GM12878 (cell line): ENCODE measurements at regions of chr18 and their contacts with region 1.

Region 1: GRCh38 chr18:80194874-80195570 is 52.3 kb downstream of the PARD6G start:
- DNase-seq: peak; percentile 48
- ATAC-seq: peak; percentile 89
- H3K4me3 ChIP-seq: no peak overlapping the region
- H3K27ac ChIP-seq: no peak overlapping the region
- H3K4me1 ChIP-seq: no peaks in the 10 kb centered on the region
- H3K27me3 ChIP-seq: peaks cover 0 to 2% of the 10 kb centered on the region in 2 experiments; a peak in 1 of 4 replicates
- CTCF ChIP-seq: no peak
- EP300 ChIP-seq: no peak
- POLR2A ChIP-seq: no peak
- RAD21 ChIP-seq: no peak

Region 2: DNA sequence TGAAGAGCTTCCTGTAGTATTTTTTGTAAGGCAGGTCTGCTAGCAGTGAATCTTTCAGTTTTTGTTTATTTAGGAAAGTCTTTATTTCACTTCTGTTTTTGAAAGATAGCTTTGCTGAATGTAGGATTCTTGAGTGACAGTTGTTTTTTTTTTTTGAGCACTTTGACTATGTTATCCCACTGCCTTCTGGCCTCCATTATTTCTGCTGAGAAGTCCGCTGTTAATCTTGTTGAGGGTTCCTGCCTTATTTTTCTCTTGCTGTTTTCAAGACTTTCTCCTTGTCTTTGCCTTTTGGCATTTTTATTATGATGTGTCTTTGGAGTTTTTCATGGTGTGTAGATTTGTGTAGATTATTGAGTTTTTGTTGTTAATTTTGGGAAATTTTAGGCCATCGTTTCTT is 138.9 kb before region 1 on chr18:
- CTCF ChIA-PET with region 1: no interaction called
- POLR2A ChIA-PET with region 1: no interaction called
- RAD21 ChIA-PET with region 1: no interaction called
- SMC1A ChIA-PET with region 1: no interaction called
- in situ Hi-C with region 1: no loop called
- intact Hi-C with region 1: no loop called
- DNase-seq: no peak
- ATAC-seq: no peak
- H3K4me3 ChIP-seq: no peak overlapping the region
- H3K27ac ChIP-seq: no peak overlapping the region
- H3K4me1 ChIP-seq: no peaks in the 10 kb centered on the region
- H3K27me3 ChIP-seq: no peaks in the 10 kb centered on the region
- CTCF ChIP-seq: no peak
- EP300 ChIP-seq: no peak
- POLR2A ChIP-seq: no peak
- RAD21 ChIP-seq: no peak

Region 3: DNA sequence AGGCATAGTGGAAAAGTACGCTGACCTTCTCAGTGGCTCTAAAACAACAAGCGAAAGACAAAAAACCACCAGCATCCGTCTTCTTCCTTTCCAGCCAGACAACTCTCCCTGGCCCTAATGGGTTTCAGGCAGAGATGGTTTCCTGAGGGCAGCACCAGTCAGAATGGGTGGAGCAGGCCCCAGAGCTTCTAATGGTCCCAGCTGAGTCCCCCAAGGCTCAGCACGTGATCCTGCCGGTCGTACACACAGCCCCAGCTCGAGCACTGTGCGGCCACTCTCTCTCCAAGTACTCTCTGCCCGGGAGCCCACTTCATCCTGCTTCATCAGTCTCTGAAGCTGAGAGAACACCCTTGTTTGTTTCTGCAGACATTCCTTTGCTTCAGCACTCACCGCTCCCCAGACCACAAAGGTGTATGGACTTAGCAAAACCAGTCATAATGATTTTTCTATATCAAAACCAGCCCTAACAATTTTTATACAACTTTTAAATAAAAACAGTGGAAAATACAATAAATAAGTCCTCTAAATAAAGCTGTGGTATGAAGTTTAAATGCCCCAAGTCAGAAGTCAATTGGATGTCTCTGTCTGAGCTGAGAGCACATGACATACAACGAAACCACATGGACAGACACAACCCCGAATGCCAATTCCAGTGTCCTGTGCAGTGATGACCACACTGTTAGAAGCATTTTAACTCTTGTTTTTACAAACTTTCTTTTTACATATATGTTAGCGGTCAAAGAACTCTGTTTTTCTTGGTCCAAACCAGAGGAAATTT is 11.6 kb before region 1 on chr18:
- CTCF ChIA-PET with region 1: interaction called, 6 read pairs
- POLR2A ChIA-PET with region 1: interaction called, 8 read pairs
- RAD21 ChIA-PET with region 1: interaction called, 8 read pairs
- SMC1A ChIA-PET with region 1: interaction called, 13 read pairs
- in situ Hi-C with region 1: no loop called
- intact Hi-C with region 1: no loop called
- DNase-seq: no peak
- ATAC-seq: no peak
- H3K4me3 ChIP-seq: no peak overlapping the region
- H3K27ac ChIP-seq: no peak overlapping the region
- H3K4me1 ChIP-seq: peaks cover 10% of the 10 kb centered on the region
- H3K27me3 ChIP-seq: no peaks in the 10 kb centered on the region; a peak in 1 of 4 replicates
- CTCF ChIP-seq: no peak
- EP300 ChIP-seq: no peak
- POLR2A ChIP-seq: no peak
- RAD21 ChIP-seq: no peak